Endothelial cell of umbilical vein (primary cell): ENCODE measurements at regions of chr12 and their contacts with region 1.

Region 1: GRCh38 chr12:43882578-43883178 is 46.8 kb downstream of the TMEM117 start:
- DNase-seq: peak; percentile 65
- H3K4me3 ChIP-seq: no peak overlapping the region
- H3K27ac ChIP-seq: no peak overlapping the region
- H3K4me1 ChIP-seq: no peaks in the 10 kb centered on the region
- H3K27me3 ChIP-seq: no peaks in the 10 kb centered on the region
- CTCF ChIP-seq: peak; percentile 48 to 58
- POLR2A ChIP-seq: no peak

Region 2: DNA sequence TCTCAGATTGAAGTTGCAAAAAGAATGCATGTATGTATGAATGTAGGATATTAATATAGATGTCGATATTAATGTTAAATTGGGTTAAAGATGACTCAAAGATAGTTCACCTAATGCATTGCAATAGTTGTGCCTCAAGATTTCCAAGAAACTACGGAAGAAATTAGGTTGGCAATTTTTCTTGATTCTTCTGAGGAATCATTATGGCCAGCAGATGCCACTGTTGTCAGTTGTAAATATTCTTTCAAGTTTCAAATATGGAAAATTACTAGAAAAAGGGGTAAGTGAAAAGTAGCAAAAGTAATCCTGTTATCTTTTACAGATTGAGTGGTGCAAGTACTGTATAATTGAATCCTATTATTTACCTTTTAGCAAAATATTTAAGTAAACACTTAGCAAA is 532.8 kb before region 1 on chr12:
- CTCF ChIA-PET with region 1: interaction called, 43 read pairs
- POLR2A ChIA-PET with region 1: no interaction called
- dilution Hi-C with region 1: no loop called
- intact Hi-C with region 1: loop called (anchors 5 kb)
- DNase-seq: peak; percentile 33
- H3K4me3 ChIP-seq: no peak overlapping the region
- H3K27ac ChIP-seq: no peak overlapping the region
- H3K4me1 ChIP-seq: no peaks in the 10 kb centered on the region
- H3K27me3 ChIP-seq: no peaks in the 10 kb centered on the region
- CTCF ChIP-seq: peak; percentile 2 to 21
- POLR2A ChIP-seq: no peak

Region 3: DNA sequence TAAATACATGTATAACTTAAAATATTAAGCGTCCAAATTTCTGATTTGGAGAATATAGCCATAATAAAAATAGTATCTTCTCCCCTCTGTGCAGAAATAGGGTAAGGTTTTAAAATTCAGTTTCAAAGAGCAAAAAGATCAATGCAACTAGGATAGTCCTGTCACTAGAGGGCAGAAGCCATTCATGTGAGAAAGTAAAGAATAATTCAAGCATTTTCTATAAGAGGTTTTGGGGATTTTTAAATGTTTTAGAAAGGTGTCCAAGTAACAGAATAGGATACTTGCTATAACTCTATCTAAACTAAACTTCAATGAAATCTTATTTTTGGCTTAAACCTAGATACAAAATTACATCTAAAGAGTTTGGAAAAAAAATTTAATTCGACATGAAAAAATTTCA is 381.0 kb before region 1 on chr12:
- CTCF ChIA-PET with region 1: interaction called, 56 read pairs
- POLR2A ChIA-PET with region 1: no interaction called
- dilution Hi-C with region 1: no loop called
- intact Hi-C with region 1: loop called (anchors 1 kb)
- DNase-seq: peak; percentile 12
- H3K4me3 ChIP-seq: no peak overlapping the region
- H3K27ac ChIP-seq: no peak overlapping the region
- H3K4me1 ChIP-seq: no peaks in the 10 kb centered on the region
- H3K27me3 ChIP-seq: no peaks in the 10 kb centered on the region
- CTCF ChIP-seq: peak; percentile 14 to 18
- POLR2A ChIP-seq: no peak

Region 4: GRCh38 chr12:43776498-43776897 is 106.2 kb before region 1 on chr12:
- CTCF ChIA-PET with region 1: interaction called, 50 read pairs
- POLR2A ChIA-PET with region 1: no interaction called
- dilution Hi-C with region 1: no loop called
- intact Hi-C with region 1: loop called (anchors 1 kb)
- DNase-seq: peak; percentile 18
- H3K4me3 ChIP-seq: no peak overlapping the region
- H3K27ac ChIP-seq: no peak overlapping the region
- H3K4me1 ChIP-seq: no peaks in the 10 kb centered on the region
- H3K27me3 ChIP-seq: no peaks in the 10 kb centered on the region
- CTCF ChIP-seq: peak; percentile 5 to 14
- POLR2A ChIP-seq: no peak

Region 5: GRCh38 chr12:43805860-43806736 is 76.6 kb before region 1 on chr12 and contains the start of gene TWF1:
- CTCF ChIA-PET with region 1: interaction called, 22 read pairs
- POLR2A ChIA-PET with region 1: no interaction called
- dilution Hi-C with region 1: no loop called
- intact Hi-C with region 1: loop called (anchors 1 kb)
- DNase-seq: peak; percentile 81
- H3K4me3 ChIP-seq: peak within 1 kb of the TSS; percentile 70 to 93 (median 74)
- H3K27ac ChIP-seq: peak within 1 kb of the TSS; percentile 89
- H3K4me1 ChIP-seq: peaks cover 13% of the 10 kb centered on the region
- H3K27me3 ChIP-seq: peaks cover 4 to 11% of the 10 kb centered on the region in 2 experiments
- CTCF ChIP-seq: peak; percentile 18 to 48
- POLR2A ChIP-seq: peak; percentile 94
- total RNA-seq, gene TWF1: 75.5 and 75.9 TPM in 2 replicates

Region 6: GRCh38 chr12:43872396-43872795 is 10.3 kb before region 1 on chr12:
- CTCF ChIA-PET with region 1: interaction called, 13 read pairs
- POLR2A ChIA-PET with region 1: interaction called, 3 read pairs
- dilution Hi-C with region 1: no loop called
- intact Hi-C with region 1: no loop called
- DNase-seq: no peak
- H3K4me3 ChIP-seq: no peak overlapping the region
- H3K27ac ChIP-seq: no peak overlapping the region
- H3K4me1 ChIP-seq: no peaks in the 10 kb centered on the region
- H3K27me3 ChIP-seq: no peaks in the 10 kb centered on the region
- CTCF ChIP-seq: no peak
- POLR2A ChIP-seq: no peak

Region 7: DNA sequence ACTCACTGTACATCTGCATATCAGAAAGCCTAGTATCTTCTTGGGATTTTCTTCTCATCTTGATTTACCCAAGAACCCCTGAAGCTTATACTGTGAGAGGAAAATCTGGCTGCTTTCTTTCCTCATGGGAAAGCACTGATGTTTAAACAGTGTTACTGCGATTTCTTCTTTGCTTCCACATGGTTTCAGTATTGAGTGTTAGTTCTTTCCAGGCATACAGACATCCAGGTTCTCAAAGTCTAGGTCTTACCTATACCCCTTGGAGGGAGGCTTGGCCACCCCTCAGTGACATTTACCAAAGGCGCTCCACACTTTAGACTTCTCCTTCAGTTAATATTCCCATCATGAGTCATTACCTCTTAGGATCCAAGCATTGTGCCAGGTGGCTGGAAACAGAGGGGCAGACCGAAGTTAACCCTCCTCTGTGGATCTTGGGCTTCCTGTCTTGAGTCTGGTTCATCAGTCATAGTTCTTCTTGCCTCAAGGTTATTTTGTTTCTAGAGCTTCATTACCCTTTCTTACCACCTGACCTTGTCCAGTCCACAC is 32.3 kb after region 1 on chr12:
- CTCF ChIA-PET with region 1: no interaction called
- POLR2A ChIA-PET with region 1: no interaction called
- dilution Hi-C with region 1: no loop called
- intact Hi-C with region 1: no loop called
- DNase-seq: no peak
- H3K4me3 ChIP-seq: no peak overlapping the region
- H3K27ac ChIP-seq: no peak overlapping the region
- H3K4me1 ChIP-seq: no peaks in the 10 kb centered on the region
- H3K27me3 ChIP-seq: no peaks in the 10 kb centered on the region
- CTCF ChIP-seq: no peak
- POLR2A ChIP-seq: no peak